ENCODE measurements at regions of chr17 and their contacts with region 1.

Region 1: GRCh38 chr17:8057691-8058114 is 18.8 kb downstream of the ALOX15B start:
- DNase-seq: peak; percentile 52 to 76 (median 62)
- ATAC-seq: peak; percentile 90
- H3K4me3 ChIP-seq: no peak overlapping the region
- H3K27ac ChIP-seq: no peak overlapping the region
- H3K4me1 ChIP-seq: no peaks in the 10 kb centered on the region; a peak in 2 of 5 replicates
- H3K27me3 ChIP-seq: 0 out of 5 replicates have a peak, but pooled peaks cover 0 to 3% of the 10 kb centered on the region in 2 experiments
- CTCF ChIP-seq: peak; percentile 75 to 80 (median 78)
- EP300 ChIP-seq: no peak
- POLR2A ChIP-seq: no peak
- RAD21 ChIP-seq: peak; percentile 72 to 82

Region 2: GRCh38 chr17:7304179-7304578 is 753.5 kb before region 1 on chr17:
- CTCF ChIA-PET with region 1: no interaction called
- POLR2A ChIA-PET with region 1: no interaction called
- in situ Hi-C with region 1: no loop called
- intact Hi-C with region 1: no loop called
- DNase-seq: no peak
- ATAC-seq: no peak
- H3K4me3 ChIP-seq: no peak overlapping the region
- H3K27ac ChIP-seq: no peak overlapping the region
- H3K4me1 ChIP-seq: peaks cover 4 to 8% of the 10 kb centered on the region in 2 experiments; a peak in 4 of 5 replicates
- H3K27me3 ChIP-seq: no peaks in the 10 kb centered on the region
- CTCF ChIP-seq: no peak
- EP300 ChIP-seq: no peak
- POLR2A ChIP-seq: no peak
- RAD21 ChIP-seq: no peak

Region 3: GRCh38 chr17:7745748-7746470 is 311.8 kb before region 1 on chr17:
- CTCF ChIA-PET with region 1: interaction called, 12 read pairs
- POLR2A ChIA-PET with region 1: no interaction called
- in situ Hi-C with region 1: no loop called
- intact Hi-C with region 1: loop called (anchors 1 kb)
- DNase-seq: peak in 2 of 4 experiments; percentile 11 to 33
- ATAC-seq: peak; percentile 72
- H3K4me3 ChIP-seq: no peak overlapping the region
- H3K27ac ChIP-seq: no peak overlapping the region
- H3K4me1 ChIP-seq: no peaks in the 10 kb centered on the region; a peak in 2 of 5 replicates
- H3K27me3 ChIP-seq: peaks cover under 1 to 13% of the 10 kb centered on the region in 2 experiments; a peak in 3 of 5 replicates
- CTCF ChIP-seq: peak in 1 of 3 experiments; percentile 16; a peak in 1 of 6 replicates
- EP300 ChIP-seq: no peak
- POLR2A ChIP-seq: no peak
- RAD21 ChIP-seq: no peak

Region 4: DNA sequence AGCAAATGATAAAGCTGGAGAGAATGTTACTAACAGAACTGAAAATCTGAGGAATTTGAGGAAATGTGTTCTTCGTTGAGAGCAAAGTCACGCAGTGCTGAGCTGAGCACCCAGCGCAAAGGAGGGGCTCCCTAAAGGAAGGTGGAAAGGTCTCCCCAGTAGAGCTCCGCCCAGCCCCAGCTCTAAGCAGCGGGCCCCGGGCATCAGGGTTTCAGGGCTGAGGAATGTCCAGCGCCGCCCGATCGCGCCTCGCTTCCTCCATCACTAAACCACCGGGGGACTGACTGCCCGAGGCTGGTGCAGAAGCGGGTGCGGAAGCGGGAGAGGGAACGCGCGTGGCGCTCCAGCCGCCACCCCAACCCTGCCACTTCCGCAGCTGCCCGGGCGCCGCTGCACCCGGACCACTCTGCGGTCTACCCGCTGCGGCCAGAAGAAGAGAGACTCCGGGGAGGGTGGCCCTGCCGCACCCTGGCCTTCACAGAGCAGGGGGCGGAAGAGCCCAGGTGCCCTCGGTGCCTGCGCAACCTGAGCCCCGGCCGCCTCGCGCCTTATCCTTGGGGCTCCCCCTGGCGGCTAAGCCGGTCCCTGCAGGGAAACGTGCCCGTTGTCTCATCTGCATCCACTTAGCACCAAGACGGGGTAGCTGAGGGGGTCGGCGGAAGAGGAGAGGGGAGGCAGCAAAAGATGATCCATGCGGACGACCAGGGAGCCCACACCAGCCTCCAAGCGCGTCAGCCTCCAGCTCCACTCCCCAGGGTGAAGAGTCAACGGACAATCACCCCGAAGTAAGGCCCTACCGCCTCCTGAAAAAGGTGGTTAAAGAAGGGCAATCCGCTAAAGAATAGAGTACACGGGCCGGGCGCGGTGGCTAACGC is 67.7 kb before region 1 on chr17:
- CTCF ChIA-PET with region 1: no interaction called
- POLR2A ChIA-PET with region 1: no interaction called
- in situ Hi-C with region 1: no loop called
- intact Hi-C with region 1: loop called (anchors 10 kb)
- DNase-seq: peak; percentile 80 to 82 (median 82)
- ATAC-seq: peak; percentile 93
- H3K4me3 ChIP-seq: peak overlapping the region; percentile 52
- H3K27ac ChIP-seq: no peak overlapping the region
- H3K4me1 ChIP-seq: peaks cover 0 to 11% of the 10 kb centered on the region in 2 experiments; a peak in 2 of 5 replicates
- H3K27me3 ChIP-seq: peaks cover 10 to 33% of the 10 kb centered on the region in 2 experiments; a peak in 4 of 5 replicates
- CTCF ChIP-seq: peak; percentile 79 to 84 (median 82)
- EP300 ChIP-seq: no peak
- POLR2A ChIP-seq: no peak
- RAD21 ChIP-seq: peak; percentile 27 to 68; a peak in 3 of 4 replicates

Region 5: GRCh38 chr17:8109661-8110464 is 52.2 kb after region 1 on chr17:
- CTCF ChIA-PET with region 1: interaction called, 18 read pairs
- POLR2A ChIA-PET with region 1: interaction called, 5 read pairs
- in situ Hi-C with region 1: no loop called
- intact Hi-C with region 1: no loop called
- DNase-seq: peak; percentile 73 to 81 (median 78)
- ATAC-seq: peak; percentile 95
- H3K4me3 ChIP-seq: peak overlapping the region; percentile 38
- H3K27ac ChIP-seq: no peak overlapping the region
- H3K4me1 ChIP-seq: peaks cover 10 to 19% of the 10 kb centered on the region in 2 experiments; a peak in 4 of 5 replicates
- H3K27me3 ChIP-seq: peaks cover 3 to 10% of the 10 kb centered on the region in 2 experiments; a peak in 3 of 5 replicates
- CTCF ChIP-seq: peak; percentile 77 to 90 (median 84)
- EP300 ChIP-seq: no peak
- POLR2A ChIP-seq: no peak
- RAD21 ChIP-seq: peak; percentile 68 to 86

Region 6: GRCh38 chr17:8125157-8125946 is 67.6 kb after region 1 on chr17:
- CTCF ChIA-PET with region 1: no interaction called
- POLR2A ChIA-PET with region 1: no interaction called
- in situ Hi-C with region 1: no loop called
- intact Hi-C with region 1: no loop called
- DNase-seq: peak; percentile 72 to 80 (median 76)
- ATAC-seq: peak; percentile 33
- H3K4me3 ChIP-seq: peak overlapping the region; percentile 73
- H3K27ac ChIP-seq: no peak overlapping the region
- H3K4me1 ChIP-seq: peaks cover 22 to 66% of the 10 kb centered on the region in 2 experiments
- H3K27me3 ChIP-seq: 0 out of 5 replicates have a peak, but pooled peaks cover 0 to 9% of the 10 kb centered on the region in 2 experiments
- CTCF ChIP-seq: no peak
- EP300 ChIP-seq: peak; percentile 51
- POLR2A ChIP-seq: peak; percentile 49; the same call in 1 of the 2 replicates
- RAD21 ChIP-seq: no peak

Region 7: GRCh38 chr17:8785547-8786413 is 728.1 kb after region 1 on chr17:
- CTCF ChIA-PET with region 1: interaction called, 6 read pairs
- POLR2A ChIA-PET with region 1: interaction called, 3 read pairs
- in situ Hi-C with region 1: loop called (anchors 25 kb)
- intact Hi-C with region 1: no loop called
- DNase-seq: peak; percentile 57 to 61 (median 59)
- ATAC-seq: peak; percentile 88
- H3K4me3 ChIP-seq: no peak overlapping the region
- H3K27ac ChIP-seq: no peak overlapping the region
- H3K4me1 ChIP-seq: no peaks in the 10 kb centered on the region
- H3K27me3 ChIP-seq: peaks cover 11 to 12% of the 10 kb centered on the region in 2 experiments; a peak in 4 of 5 replicates
- CTCF ChIP-seq: peak; percentile 65 to 74 (median 72)
- EP300 ChIP-seq: no peak
- POLR2A ChIP-seq: no peak
- RAD21 ChIP-seq: peak; percentile 58 to 74

Measured in K562 (cell line).